Activated B cell treated with CpG ODN at 0.5 μM for 24 hours (primary cell): ENCODE measurements at regions of chr5 and their contacts with region 1.

Region 1: GRCh38 chr5:56565644-56566043 is 249.7 kb upstream of the MAP3K1 start:
- DNase-seq: peak; percentile 32
- ATAC-seq: peak; percentile 97
- H3K4me3 Mint-ChIP-seq: peak overlapping the region; percentile 49
- H3K27ac Mint-ChIP-seq: peak overlapping the region; percentile 33
- H3K4me1 Mint-ChIP-seq: peaks cover 48% of the 10 kb centered on the region
- H3K27me3 Mint-ChIP-seq: no peaks in the 10 kb centered on the region
- CTCF ChIP-seq: no peak

Region 2: DNA sequence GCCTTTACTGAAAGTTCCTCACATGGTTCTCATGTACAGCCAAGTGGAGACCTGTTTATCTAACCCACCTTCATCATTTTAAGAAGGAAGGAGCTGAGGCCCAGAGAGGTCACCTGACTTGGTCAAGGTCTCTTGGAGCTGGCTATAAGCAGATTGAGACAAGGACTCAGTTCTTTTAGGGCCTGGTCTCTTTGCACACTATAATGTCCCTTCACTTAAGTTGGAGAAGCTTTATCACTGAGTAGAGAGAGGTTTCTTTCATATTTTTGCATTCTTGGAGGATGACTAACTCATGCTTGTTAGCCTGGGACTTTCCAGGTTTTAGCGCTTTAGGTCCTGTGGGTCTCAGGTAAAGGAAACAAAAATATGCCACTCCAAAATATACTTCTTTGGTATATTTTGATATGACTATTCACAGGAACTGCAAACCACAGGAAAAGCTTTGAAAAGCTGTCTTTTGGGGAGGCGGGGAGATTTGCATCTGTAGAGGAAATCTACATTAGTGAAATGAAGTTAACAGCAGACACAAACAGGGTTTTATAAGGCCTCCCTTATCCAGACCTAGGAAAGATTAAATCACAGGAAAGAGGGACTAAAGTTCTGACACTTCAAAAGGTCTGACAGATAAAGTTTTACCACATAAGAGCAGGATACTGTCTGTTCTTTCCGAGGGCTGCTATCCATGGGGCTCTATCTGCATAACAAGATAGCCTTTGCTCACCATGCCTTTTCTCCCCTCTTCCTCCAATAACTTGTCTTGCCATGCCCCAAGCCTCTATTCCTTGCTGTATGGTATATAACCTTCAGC is 236.7 kb before region 1 on chr5:
- CTCF ChIA-PET with region 1: no interaction called
- POLR2A ChIA-PET with region 1: no interaction called
- intact Hi-C with region 1: loop called (anchors 5 kb)
- DNase-seq: no peak
- ATAC-seq: peak; percentile 80
- H3K4me3 Mint-ChIP-seq: peak overlapping the region; percentile 52
- H3K27ac Mint-ChIP-seq: peak overlapping the region; percentile 89
- H3K4me1 Mint-ChIP-seq: peaks cover 59% of the 10 kb centered on the region
- H3K27me3 Mint-ChIP-seq: no peaks in the 10 kb centered on the region
- CTCF ChIP-seq: no peak

Region 3: DNA sequence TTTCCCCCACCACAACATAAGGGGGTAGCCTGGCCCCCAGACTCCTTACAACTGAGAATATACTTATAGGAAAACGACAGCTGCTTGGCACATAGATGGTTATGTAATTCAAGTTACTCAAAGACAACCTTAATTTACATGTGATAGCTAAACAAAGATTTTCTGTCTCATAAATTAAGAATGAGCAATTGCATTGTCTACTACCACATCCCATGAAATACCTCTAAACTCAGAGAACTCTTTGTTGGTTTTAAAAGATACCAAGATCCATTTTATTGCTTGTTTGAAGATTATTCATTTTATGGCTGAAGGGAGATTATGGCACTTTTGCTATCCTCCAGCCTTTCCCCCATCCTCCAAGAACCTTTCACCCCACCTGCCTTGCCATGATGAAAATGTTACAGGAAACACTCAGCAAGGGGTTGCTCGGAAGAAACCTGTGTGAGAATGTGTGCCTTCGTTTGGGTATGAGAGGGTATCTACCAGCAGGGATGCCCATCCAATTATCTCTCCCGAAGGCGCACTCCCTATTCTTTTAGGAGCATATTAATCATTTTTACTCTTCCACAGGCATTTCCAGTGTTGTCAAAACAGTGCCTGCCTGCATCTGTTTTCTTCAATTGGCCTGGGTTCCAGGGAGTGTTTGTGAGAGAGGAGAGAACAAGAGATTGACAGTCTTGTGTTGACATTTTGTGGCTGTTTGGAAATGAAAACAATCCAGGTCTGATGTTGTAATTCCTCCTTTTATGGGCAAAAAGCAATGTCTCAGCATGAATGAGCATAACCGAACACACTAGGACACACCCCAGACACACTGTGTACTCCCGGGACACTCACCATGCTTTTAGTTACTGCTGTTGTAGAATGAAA is 124.5 kb before region 1 on chr5:
- CTCF ChIA-PET with region 1: no interaction called
- POLR2A ChIA-PET with region 1: no interaction called
- intact Hi-C with region 1: no loop called
- DNase-seq: no peak
- ATAC-seq: no peak
- H3K4me3 Mint-ChIP-seq: no peak overlapping the region
- H3K27ac Mint-ChIP-seq: no peak overlapping the region
- H3K4me1 Mint-ChIP-seq: no peaks in the 10 kb centered on the region
- H3K27me3 Mint-ChIP-seq: no peaks in the 10 kb centered on the region
- CTCF ChIP-seq: no peak

Region 4: GRCh38 chr5:56588636-56589480 is 23.2 kb after region 1 on chr5:
- CTCF ChIA-PET with region 1: no interaction called
- POLR2A ChIA-PET with region 1: interaction called, 15 read pairs
- intact Hi-C with region 1: loop called (anchors 1 kb)
- DNase-seq: peak; percentile 69
- ATAC-seq: peak; percentile 86
- H3K4me3 Mint-ChIP-seq: peak overlapping the region; percentile 64
- H3K27ac Mint-ChIP-seq: peak overlapping the region; percentile 97
- H3K4me1 Mint-ChIP-seq: peaks cover 69% of the 10 kb centered on the region
- H3K27me3 Mint-ChIP-seq: no peaks in the 10 kb centered on the region
- CTCF ChIP-seq: no peak

Region 5: DNA sequence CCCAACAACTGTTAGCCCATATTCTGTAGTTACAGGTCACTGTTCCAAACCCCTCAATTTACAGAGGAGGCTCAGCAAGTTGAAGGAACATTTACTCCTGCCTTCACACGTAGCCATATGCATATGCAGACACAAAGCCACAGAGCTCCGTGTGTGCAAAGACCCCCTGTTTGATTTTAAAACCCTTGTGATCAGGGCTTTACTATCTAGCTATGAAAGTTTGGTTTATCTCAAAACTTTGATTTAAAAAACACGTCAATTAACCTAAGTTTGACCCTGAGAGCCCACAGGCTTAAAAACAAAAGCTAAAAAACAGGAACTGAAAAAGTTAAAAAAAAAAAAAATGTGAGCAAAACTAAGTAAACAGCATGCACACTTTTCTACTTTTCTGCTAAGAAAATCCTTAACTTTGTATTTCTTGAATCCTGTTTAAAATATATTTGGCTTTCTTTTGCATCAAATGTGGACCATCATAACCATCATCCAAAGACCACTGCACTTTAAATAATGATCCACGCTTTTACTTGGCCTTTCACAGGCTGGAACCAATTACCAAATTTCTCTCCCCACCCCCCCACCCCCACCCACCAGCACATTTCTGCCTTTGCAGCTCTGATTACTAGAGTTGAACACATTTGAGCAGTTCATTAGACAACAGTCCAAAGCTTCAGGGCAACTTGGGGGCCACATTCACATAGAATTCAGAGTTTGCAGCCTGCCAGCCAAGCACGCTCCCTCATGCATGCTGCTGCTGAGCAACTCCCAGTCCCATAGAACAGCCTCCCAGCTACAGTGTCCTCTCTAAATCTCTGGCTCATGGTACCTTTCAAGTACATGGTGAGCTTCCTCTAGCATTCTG is 120.9 kb after region 1 on chr5:
- CTCF ChIA-PET with region 1: interaction called, 3 read pairs
- POLR2A ChIA-PET with region 1: interaction called, 4 read pairs
- intact Hi-C with region 1: loop called (anchors 1 kb)
- DNase-seq: peak; percentile 31
- ATAC-seq: peak; percentile 72
- H3K4me3 Mint-ChIP-seq: peak overlapping the region; percentile 62
- H3K27ac Mint-ChIP-seq: peak overlapping the region; percentile 88
- H3K4me1 Mint-ChIP-seq: peaks cover 98% of the 10 kb centered on the region
- H3K27me3 Mint-ChIP-seq: no peaks in the 10 kb centered on the region
- CTCF ChIP-seq: no peak

Region 6: DNA sequence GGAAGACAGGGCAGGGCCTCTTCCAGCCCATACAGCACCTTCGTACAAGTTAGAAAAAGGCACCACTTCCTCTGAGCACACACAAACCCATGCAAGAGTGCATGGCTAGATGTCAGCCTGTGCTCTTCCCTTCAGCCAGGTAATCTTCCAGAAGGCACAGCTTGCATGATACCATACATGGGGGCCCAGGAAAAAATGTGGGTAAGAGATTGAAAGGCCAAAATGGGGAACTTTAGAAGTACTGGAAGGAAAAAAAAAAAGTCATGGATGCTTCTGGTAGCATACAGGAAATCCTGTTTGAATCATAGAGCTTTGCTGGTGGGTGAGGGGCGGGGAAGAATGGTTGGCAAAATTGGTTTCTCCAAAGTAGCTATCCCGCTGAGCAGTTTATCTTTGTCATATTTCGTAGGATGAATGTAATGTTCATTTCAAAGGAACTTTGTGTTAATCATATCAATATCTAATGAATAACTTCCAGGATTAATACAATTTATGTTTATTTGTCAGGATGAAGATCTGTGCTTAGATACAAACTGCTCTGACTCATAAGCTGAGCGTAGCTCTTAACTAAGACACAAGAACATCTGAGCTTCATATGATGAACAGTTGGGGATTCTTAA is 171.5 kb after region 1 on chr5:
- CTCF ChIA-PET with region 1: no interaction called
- POLR2A ChIA-PET with region 1: no interaction called
- intact Hi-C with region 1: loop called (anchors 5 kb)
- DNase-seq: no peak
- ATAC-seq: peak; percentile 29
- H3K4me3 Mint-ChIP-seq: peak overlapping the region; percentile 25
- H3K27ac Mint-ChIP-seq: peak overlapping the region; percentile 83
- H3K4me1 Mint-ChIP-seq: peaks cover 62% of the 10 kb centered on the region
- H3K27me3 Mint-ChIP-seq: no peaks in the 10 kb centered on the region
- CTCF ChIP-seq: no peak